Activated naive CD8-positive, alpha-beta T cell treated with anti-CD3 and anti-CD28 coated beads, Interleukin-2, amount 10 ng/mL, durations not matched to agents 7 days and 5 days (primary cell): ENCODE measurements at regions of chr2 and their contacts with region 1.

Region 1: DNA sequence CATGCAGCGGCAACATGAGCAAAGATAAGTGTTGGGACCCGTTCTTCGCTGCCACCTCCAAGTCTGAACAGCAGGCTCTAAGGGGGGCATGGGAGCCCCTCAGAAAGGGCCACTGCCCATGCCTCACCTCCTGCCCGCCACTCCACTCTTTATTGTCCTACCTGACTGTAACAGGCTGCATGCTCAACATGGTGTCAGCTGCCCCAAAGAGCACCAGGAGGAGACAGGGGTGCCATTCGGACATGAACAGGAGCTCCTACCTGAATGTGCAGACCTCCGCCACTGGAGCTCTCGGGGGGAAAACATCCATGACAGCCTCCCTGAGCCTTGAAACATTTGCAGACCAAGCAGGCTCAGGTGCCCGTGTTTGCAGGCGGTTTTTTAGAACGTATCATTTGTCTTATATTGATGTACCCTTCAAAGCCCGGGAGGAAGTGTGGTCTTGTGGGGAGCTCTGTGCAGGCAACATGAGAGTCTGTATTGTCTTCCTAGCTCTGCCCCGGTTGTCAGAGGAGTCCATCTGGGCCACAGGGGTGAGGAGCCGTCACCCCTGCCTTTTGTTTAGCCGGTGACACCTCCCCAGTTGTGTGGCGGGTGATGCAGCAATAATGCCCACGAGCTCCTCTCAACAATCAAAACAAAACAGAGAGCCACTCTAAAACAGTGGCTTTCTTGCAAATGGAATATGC is 35.1 kb upstream of the CD8A start:
- DNase-seq: peak; percentile 79
- ATAC-seq: peak; percentile 80
- H3K4me3 Mint-ChIP-seq: peak overlapping the region; percentile 87
- H3K27ac Mint-ChIP-seq: peak overlapping the region; percentile 97
- H3K4me1 Mint-ChIP-seq: peaks cover 72% of the 10 kb centered on the region
- H3K27me3 Mint-ChIP-seq: no peaks in the 10 kb centered on the region

Region 2: GRCh38 chr2:86476092-86476491 is 349.7 kb before region 1 on chr2:
- POLR2A ChIA-PET with region 1: no interaction called
- DNase-seq: no peak
- ATAC-seq: no peak
- H3K4me3 Mint-ChIP-seq: no peak overlapping the region
- H3K27ac Mint-ChIP-seq: peak overlapping the region; percentile 3
- H3K4me1 Mint-ChIP-seq: peaks cover 7% of the 10 kb centered on the region
- H3K27me3 Mint-ChIP-seq: no peaks in the 10 kb centered on the region

Region 3: GRCh38 chr2:86783615-86784339 is 42.1 kb before region 1 on chr2:
- POLR2A ChIA-PET with region 1: interaction called, 145 read pairs
- DNase-seq: no peak
- ATAC-seq: no peak
- H3K4me3 Mint-ChIP-seq: peak overlapping the region; percentile 93
- H3K27ac Mint-ChIP-seq: peak overlapping the region; percentile 99
- H3K4me1 Mint-ChIP-seq: peaks cover 58% of the 10 kb centered on the region
- H3K27me3 Mint-ChIP-seq: no peaks in the 10 kb centered on the region

Region 4: GRCh38 chr2:86790676-86791572 is 34.9 kb before region 1 on chr2 and contains the start of gene CD8A:
- POLR2A ChIA-PET with region 1: interaction called, 145 read pairs
- DNase-seq: peak; percentile 86
- ATAC-seq: peak; percentile 34
- H3K4me3 Mint-ChIP-seq: peak within 1 kb of the TSS; percentile 93
- H3K27ac Mint-ChIP-seq: peak within 1 kb of the TSS; percentile 99
- H3K4me1 Mint-ChIP-seq: peaks cover 55% of the 10 kb centered on the region
- H3K27me3 Mint-ChIP-seq: no peaks in the 10 kb centered on the region
- total RNA-seq, gene CD8A: 666 to 683 TPM

Region 5: GRCh38 chr2:86808315-86809161 is 17.3 kb before region 1 on chr2:
- POLR2A ChIA-PET with region 1: interaction called, 213 read pairs
- DNase-seq: peak; percentile 98
- ATAC-seq: peak; percentile 74
- H3K4me3 Mint-ChIP-seq: peak overlapping the region; percentile 93
- H3K27ac Mint-ChIP-seq: peak overlapping the region; percentile 99
- H3K4me1 Mint-ChIP-seq: peaks cover 55% of the 10 kb centered on the region
- H3K27me3 Mint-ChIP-seq: no peaks in the 10 kb centered on the region

Region 6: GRCh38 chr2:86815611-86816010 is 10.2 kb before region 1 on chr2:
- POLR2A ChIA-PET with region 1: interaction called, 213 read pairs
- DNase-seq: no peak
- ATAC-seq: peak; percentile 69
- H3K4me3 Mint-ChIP-seq: peak overlapping the region; percentile 66
- H3K27ac Mint-ChIP-seq: peak overlapping the region; percentile 86
- H3K4me1 Mint-ChIP-seq: peaks cover 72% of the 10 kb centered on the region
- H3K27me3 Mint-ChIP-seq: no peaks in the 10 kb centered on the region